ENCODE measurements at regions of chr2 and their contacts with region 1.

Region 1: GRCh38 chr2:28392297-28393113 is at the start of gene FOSL2:
- DNase-seq: peak; percentile 98
- ATAC-seq: peak; percentile 82
- H3K4me3 ChIP-seq: peak within 1 kb of the TSS; percentile 92 to 95
- H3K27ac ChIP-seq: peak within 1 kb of the TSS; percentile 92 to 99
- H3K4me1 ChIP-seq: no peaks in the 10 kb centered on the region
- H3K27me3 ChIP-seq: no peaks in the 10 kb centered on the region
- total RNA-seq, gene FOSL2: 184 to 260 TPM

Region 2: GRCh38 chr2:27703638-27704341 is 688.7 kb before region 1 on chr2:
- intact Hi-C with region 1: loop called (anchors 1 to 5 kb)
- DNase-seq: peak; percentile 88 to 90
- ATAC-seq: peak; percentile 77
- H3K4me3 ChIP-seq: no peak overlapping the region
- H3K27ac ChIP-seq: peak overlapping the region; percentile 42 to 93
- H3K4me1 ChIP-seq: peaks cover 2 to 5% of the 10 kb centered on the region in 2 donors
- H3K27me3 ChIP-seq: no peaks in the 10 kb centered on the region

Region 3: GRCh38 chr2:27798948-27799645 is 593.4 kb before region 1 on chr2:
- intact Hi-C with region 1: loop called (anchors 5 to 10 kb)
- DNase-seq: peak; percentile 87 to 88
- ATAC-seq: peak; percentile 82
- H3K4me3 ChIP-seq: no peak overlapping the region
- H3K27ac ChIP-seq: peak overlapping the region; percentile 79 to 99
- H3K4me1 ChIP-seq: peaks cover 6 to 21% of the 10 kb centered on the region in 2 donors
- H3K27me3 ChIP-seq: no peaks in the 10 kb centered on the region

Region 4: DNA sequence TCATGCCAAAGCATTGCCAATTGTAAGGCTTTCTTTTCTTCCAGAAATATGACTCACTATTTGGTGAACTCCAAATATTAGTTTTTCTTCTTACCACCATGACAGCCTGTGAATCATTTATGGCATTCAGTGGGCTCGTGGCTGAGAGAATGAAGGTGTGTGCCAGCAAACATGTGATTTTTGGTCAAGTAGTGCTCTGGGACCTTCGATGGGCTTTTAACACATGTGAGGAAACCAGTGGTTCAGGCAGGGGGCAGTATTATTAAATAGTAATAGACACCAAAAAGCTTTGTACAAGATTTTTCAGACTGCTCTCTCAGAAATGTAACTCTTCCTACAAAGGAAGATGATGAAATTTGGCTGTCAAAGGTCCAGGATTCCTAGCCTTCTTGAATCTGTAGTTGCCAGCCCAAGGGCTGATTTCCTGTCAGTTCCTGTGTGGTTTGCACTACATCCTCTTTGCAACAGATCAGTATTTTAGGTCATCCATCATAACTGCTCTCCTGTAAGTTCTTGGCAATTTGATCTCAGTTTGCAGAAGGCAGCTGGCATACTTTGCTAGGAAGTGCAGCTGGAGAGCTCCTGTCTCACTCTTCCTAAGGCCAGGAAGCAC is 437.6 kb before region 1 on chr2:
- intact Hi-C with region 1: loop called (anchors 2 kb)
- DNase-seq: peak in 1 of 2 donors; percentile 74
- ATAC-seq: peak; percentile 90
- H3K4me3 ChIP-seq: no peak overlapping the region
- H3K27ac ChIP-seq: peak overlapping the region; percentile 75 to 82
- H3K4me1 ChIP-seq: peaks cover 5 to 8% of the 10 kb centered on the region in 2 donors
- H3K27me3 ChIP-seq: no peaks in the 10 kb centered on the region

Region 5: GRCh38 chr2:28276076-28276618 is 116.4 kb before region 1 on chr2:
- intact Hi-C with region 1: loop called (anchors 2 to 5 kb)
- DNase-seq: no peak
- ATAC-seq: peak; percentile 77
- H3K4me3 ChIP-seq: no peak overlapping the region
- H3K27ac ChIP-seq: peak overlapping the region in 1 of 2 donors; percentile 67
- H3K4me1 ChIP-seq: peaks cover 0 to 6% of the 10 kb centered on the region in 2 donors
- H3K27me3 ChIP-seq: no peaks in the 10 kb centered on the region

Region 6: GRCh38 chr2:28435814-28436351 is 43.4 kb after region 1 on chr2:
- intact Hi-C with region 1: no loop called
- DNase-seq: no peak
- ATAC-seq: no peak
- H3K4me3 ChIP-seq: no peak overlapping the region
- H3K27ac ChIP-seq: no peak overlapping the region
- H3K4me1 ChIP-seq: no peaks in the 10 kb centered on the region
- H3K27me3 ChIP-seq: no peaks in the 10 kb centered on the region